GM10248 (cell line): ENCODE measurements at regions of chr5 and their contacts with region 1.

Region 1: DNA sequence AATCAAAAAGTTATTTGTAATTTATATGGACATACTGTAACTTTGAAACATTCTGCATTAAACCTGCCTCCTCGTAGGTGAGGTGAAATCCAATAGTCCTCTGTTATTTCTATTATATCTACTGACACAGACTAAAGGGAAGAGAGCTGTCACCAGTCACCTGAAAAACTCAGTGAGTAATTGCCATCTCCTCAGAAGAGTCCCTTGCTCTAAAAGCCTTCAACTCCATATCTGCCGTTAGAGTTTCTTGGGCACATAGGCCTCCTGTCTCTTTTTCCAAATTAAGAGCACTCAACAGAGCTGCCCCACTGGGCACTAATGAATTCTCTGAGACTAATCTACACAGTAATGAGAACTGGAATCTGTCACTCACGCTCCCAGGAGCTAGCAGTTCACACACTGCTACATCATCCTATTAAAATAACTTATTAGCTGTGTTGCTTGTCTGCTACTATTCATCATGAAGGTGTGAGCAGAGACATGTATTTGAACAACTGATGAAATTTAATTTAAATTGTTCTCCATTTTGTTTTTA is 67.3 kb upstream of the VCAN start:
- DNase-seq: no peak
- CTCF ChIP-seq: no peak

Region 2: DNA sequence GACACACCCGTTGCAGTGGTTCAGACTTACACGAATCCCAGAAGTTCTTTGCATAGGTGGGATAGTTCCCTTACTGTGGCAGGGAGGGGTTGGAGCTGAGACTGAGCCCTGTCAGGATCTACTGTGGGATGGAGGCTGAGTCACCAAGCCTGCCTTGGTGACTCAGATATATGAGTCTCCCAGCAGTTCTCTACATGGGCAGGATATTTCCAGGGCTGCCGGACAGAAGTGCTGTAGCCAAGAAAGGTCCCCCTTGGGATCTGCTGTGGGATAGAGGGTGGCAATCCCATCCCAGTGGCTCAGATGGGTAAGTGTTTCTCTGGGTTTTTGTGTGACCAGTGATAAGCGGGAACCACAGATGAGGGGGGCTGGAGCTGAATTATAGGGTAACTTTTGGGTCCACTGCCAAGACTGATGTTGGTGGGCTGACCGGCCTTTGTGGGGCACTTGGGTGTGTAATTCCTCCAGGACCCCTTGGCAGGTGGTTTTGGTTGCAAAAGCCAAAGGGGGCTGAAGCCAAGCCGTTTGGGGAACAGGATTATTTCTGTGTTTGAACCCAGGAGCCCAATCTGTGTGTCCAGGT is 308.2 kb before region 1 on chr5:
- CTCF ChIA-PET with region 1: no interaction called
- POLR2A ChIA-PET with region 1: no interaction called
- DNase-seq: no peak
- CTCF ChIP-seq: no peak

Region 3: DNA sequence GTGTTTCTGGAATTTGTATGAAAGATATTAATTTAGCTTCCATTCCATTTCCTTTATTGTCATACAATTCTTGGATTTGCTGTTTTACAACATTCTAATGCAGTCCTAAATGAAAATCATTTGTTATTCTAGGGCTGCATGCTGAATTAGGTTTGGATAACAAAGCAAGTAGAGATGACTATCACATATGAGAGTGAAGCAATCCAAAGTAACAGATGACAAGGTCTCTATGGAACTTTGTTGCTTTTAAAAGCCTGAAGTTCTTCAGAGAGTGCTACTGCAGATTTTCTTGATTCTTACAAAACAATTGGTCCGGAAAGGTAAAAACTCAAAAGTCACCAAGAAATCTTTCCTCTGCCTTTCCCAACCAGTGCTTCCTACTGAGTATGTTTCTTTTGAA is 10.4 kb after region 1 on chr5:
- CTCF ChIA-PET with region 1: interaction called, 15 read pairs
- POLR2A ChIA-PET with region 1: no interaction called
- DNase-seq: no peak
- CTCF ChIP-seq: no peak

Region 4: DNA sequence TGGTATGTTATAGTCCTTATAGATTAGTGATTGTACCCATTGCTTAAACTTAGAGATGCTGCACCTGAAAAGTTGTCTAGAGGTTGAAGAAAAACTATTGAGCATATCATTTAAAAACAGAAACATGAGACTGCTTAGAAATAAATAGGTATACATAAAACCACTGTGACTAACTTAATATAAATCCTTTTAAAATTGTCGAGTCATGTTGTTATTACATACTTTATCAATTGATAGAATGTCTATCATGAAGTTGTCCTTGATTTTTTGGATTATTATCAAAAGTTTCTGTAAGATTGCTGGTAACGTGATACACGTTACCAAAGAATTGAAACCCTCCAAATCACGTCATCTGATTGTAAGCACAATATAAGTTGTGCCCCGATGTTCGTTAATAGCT is 32.0 kb after region 1 on chr5:
- CTCF ChIA-PET with region 1: no interaction called
- POLR2A ChIA-PET with region 1: no interaction called
- DNase-seq: no peak
- CTCF ChIP-seq: no peak

Region 5: DNA sequence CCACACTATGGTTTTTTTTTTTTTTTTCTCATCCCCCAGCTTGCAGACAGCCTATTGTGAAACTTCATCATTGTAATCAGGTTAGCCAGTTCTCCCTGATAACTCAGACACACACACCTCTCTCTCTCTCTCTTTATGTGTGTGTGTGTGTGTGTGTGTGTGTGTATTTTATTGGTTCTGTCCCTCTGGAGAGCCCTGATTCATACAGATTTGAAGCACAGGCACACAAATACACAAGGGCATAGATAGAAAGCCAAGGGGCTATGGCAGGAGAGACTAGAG is 46.7 kb after region 1 on chr5:
- CTCF ChIA-PET with region 1: no interaction called
- POLR2A ChIA-PET with region 1: no interaction called
- DNase-seq: no peak
- CTCF ChIP-seq: no peak